Head of caudate nucleus (tissue), 42 donors: ENCODE measurements at regions of chr5 and their contacts with region 1.

Region 1: DNA sequence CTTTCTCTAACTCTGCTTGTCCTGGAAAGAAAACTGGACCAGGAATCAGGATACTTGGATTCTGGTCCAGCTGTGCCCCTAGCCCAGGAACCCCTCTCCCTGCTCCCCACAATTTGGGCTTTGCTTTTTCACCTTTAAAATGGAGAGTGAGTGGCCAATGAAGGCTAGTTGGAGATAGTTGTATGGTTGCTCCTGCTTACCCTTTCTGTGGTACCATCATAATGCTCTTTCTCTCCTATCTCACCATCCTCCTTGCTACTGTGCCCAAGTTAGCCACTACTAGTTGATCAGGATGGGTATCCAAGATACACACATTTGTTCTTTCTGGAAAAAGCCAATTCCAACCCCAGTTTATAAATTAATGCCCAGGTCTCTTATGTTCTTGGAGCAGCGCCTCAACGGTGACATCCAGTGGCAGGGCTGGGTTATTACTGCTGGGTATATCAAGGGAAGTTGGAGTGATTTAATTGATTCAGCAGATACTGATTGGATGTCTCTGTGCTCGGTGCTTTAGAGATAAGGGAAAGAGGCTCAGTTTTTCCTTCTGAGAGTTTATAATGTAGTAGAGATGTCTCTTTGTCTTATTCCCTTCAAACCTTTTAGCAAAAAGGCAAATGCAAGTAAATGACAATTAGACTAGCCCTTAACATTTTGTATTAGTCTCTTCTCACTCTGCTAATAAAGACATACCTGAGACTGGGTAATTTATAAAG is 38.6 kb downstream of the FAXDC2 start:
- DNase-seq: peak; percentile 31 to 85 (median 62)

Region 2: GRCh38 chr5:154654486-154655371 is 157.1 kb before region 1 on chr5:
- intact Hi-C with region 1: loop called (anchors 5 kb)
- DNase-seq: no peak